Heart left ventricle (tissue), 16 donors: ENCODE measurements at regions of chr11 and their contacts with region 1.

Region 1: DNA sequence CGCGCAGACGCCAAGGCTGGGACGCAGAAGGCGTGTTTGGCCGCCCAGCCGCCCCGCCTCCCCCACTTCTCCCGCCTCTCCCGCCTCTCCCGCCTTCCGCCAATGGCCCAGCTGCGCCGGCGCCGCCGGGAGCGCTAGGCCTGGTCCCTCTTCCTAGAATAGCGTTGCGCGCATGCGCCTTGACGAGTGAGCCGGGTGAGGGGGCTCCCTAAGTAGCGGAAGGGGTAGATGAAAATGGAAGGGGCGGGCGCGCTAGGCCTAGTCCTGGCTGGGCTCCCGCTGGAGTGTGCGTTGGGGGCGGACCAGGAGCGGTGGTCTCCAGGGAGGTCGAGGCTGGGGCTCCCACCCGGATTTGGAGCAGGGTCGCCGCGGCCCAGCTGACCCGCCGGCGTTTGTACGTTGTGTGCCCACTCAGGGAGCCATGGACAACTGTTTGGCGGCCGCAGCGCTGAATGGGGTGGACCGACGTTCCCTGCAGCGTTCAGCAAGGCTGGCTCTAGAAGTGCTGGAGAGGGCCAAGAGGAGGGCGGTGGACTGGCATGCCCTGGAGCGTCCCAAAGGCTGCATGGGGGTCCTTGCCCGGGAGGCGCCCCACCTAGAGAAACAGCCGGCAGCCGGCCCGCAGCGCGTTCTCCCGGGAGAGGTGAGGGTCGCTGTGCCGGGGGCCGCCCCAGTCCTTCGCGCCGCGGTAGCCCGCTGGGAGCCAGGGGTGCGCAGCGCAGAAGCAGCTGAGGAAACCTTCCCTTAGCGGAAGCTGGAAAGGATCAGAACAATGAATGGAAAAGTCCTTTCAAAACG is at the start of gene AKIP1:
- DNase-seq: peak; percentile 97 to 98 (median 98)
- ATAC-seq: peak; percentile 94 to 97 (median 96)
- H3K4me3 ChIP-seq: peak within 1 kb of the TSS; percentile 40 to 96 (median 85)
- H3K27ac ChIP-seq: peak within 1 kb of the TSS; percentile 80 to 98 (median 94)
- H3K4me1 ChIP-seq: peaks cover 0 to 52% (median 25%) of the 10 kb centered on the region in 12 donors
- H3K27me3 ChIP-seq: no peaks in the 10 kb centered on the region
- CTCF ChIP-seq: no peak
- POLR2A ChIP-seq: peak in 1 of 2 donors; percentile 74
- total RNA-seq, gene AKIP1: 21.6 to 39.9 (median 27.4) TPM

Region 2: DNA sequence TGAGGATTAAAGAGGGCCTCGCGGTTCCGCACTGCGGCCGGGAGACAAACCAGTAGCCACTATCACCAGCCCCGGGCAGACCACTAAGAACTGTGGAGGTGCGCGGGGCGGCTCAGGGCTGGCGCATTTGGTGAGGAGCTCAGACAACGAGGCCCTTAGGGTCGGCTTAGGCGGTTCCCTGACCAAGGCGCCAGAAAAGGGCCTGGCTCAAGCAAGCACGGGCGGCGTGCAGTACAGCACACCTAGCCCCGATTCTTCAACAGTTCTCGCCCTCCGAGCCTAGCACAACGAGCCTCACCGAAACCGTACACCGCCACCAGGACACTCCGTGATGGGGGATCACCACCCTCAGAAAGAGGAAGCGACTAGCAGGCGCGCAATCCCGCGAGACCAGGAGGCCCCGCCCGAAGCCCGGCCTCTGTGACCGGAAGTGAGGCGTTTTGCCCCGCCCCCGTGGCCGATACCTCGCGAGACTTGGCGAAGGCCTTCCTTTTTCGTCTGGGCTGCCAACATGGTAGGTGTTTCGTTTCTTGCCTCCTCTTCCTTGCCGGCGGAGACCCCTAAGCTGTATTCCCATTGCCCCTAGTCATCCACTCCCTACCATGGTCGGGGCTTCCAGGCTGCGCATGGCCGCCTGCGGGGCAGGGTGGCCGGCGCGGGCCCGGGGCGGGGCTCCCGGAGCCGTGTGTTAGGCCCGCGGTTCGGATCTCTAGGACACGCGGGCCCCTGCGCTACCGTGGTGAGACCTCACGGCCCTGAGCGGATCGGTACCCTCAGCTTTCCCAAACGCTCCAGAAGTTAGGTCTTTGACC is 228.7 kb before region 1 on chr11 and contains the starts of genes RPL27A and TRIM66:
- intact Hi-C with region 1: loop called in 5 of 10 experiments (anchors 5 to 10 kb)
- DNase-seq: peak; percentile 99
- ATAC-seq: peak; percentile 97 to 99 (median 98)
- H3K4me3 ChIP-seq: peak within 1 kb of the TSS; percentile 58 to 100 (median 90)
- H3K27ac ChIP-seq: peak within 1 kb of the TSS; percentile 91 to 98 (median 96)
- H3K4me1 ChIP-seq: peaks cover 0 to 34% (median 22%) of the 10 kb centered on the region in 12 donors
- H3K27me3 ChIP-seq: no peaks in the 10 kb centered on the region
- CTCF ChIP-seq: peak in 6 of 12 donors; percentile 7 to 26 (median 13)
- POLR2A ChIP-seq: peak; percentile 51 to 97
- total RNA-seq, gene RPL27A: 299 to 597 (median 438) TPM
- total RNA-seq, gene TRIM66: 0.71 to 10.1 (median 4.1) TPM

Region 3: DNA sequence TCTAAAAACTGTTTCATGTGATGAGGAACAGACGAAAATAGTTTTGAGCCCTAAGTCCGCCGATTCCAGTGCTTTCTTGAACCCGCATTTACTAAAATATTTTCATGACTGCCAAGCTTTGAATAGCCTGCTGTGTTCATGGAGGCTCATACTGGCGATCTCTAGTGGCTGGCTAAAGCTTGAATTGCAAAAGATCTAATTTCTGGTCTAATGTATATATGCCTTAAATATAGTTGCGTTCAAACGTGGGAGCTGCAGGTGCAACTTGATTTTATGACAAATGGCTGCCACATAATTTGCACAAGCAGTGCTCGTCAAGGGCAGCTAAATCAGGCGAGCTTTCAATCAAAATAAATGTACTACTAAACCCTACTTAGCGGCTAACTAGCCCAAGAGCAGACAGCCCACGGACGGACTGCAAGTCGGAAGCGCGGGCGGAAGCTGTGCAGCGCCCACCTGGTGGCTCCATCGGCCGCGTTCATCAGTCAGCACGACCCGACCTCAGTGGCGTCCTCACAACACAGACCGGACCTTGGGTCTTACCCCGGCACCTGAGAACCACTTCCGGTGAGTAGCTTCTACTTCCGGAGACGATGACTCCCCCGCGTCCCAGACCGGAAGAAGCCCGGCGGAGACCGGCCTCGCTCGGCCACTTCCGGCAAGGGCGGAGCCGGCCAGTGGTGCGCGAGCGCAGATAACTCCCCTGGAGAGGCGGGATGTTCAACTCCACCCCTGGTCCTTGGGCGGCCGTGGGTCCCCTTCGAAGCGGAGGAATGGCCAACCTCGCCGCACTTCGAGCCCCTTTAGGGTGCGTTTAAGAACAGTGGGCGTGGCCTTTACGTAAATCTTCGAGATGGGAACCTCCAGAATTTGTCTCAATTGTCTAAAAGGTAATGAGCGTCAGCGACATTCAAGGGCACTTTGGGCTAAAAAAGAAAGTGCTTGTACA is 222.5 kb before region 1 on chr11:
- intact Hi-C with region 1: loop called in 6 of 10 experiments (anchors 2 to 10 kb)
- DNase-seq: peak; percentile 94 to 97 (median 96)
- ATAC-seq: peak; percentile 97 to 99 (median 98)
- H3K4me3 ChIP-seq: peak overlapping the region; percentile 38 to 75 (median 66)
- H3K27ac ChIP-seq: peak overlapping the region; percentile 45 to 96 (median 88)
- H3K4me1 ChIP-seq: peaks cover 0 to 44% (median 22%) of the 10 kb centered on the region in 12 donors
- H3K27me3 ChIP-seq: no peaks in the 10 kb centered on the region
- CTCF ChIP-seq: peak in 5 of 12 donors; percentile 17 to 53 (median 49)
- POLR2A ChIP-seq: peak in 1 of 2 donors; percentile 71

Region 4: GRCh38 chr11:8768625-8769333 is 142.4 kb before region 1 on chr11:
- intact Hi-C with region 1: no loop called
- DNase-seq: peak in 4 of 5 donors; percentile 71 to 88 (median 80)
- ATAC-seq: peak; percentile 90 to 94 (median 93)
- H3K4me3 ChIP-seq: no peak overlapping the region
- H3K27ac ChIP-seq: peak overlapping the region; percentile 31 to 86 (median 72)
- H3K4me1 ChIP-seq: peaks cover 8 to 90% (median 44%) of the 10 kb centered on the region in 12 donors
- H3K27me3 ChIP-seq: no peaks in the 10 kb centered on the region
- CTCF ChIP-seq: peak in 6 of 12 donors; percentile 8 to 43 (median 25)
- POLR2A ChIP-seq: no peak

Region 5: DNA sequence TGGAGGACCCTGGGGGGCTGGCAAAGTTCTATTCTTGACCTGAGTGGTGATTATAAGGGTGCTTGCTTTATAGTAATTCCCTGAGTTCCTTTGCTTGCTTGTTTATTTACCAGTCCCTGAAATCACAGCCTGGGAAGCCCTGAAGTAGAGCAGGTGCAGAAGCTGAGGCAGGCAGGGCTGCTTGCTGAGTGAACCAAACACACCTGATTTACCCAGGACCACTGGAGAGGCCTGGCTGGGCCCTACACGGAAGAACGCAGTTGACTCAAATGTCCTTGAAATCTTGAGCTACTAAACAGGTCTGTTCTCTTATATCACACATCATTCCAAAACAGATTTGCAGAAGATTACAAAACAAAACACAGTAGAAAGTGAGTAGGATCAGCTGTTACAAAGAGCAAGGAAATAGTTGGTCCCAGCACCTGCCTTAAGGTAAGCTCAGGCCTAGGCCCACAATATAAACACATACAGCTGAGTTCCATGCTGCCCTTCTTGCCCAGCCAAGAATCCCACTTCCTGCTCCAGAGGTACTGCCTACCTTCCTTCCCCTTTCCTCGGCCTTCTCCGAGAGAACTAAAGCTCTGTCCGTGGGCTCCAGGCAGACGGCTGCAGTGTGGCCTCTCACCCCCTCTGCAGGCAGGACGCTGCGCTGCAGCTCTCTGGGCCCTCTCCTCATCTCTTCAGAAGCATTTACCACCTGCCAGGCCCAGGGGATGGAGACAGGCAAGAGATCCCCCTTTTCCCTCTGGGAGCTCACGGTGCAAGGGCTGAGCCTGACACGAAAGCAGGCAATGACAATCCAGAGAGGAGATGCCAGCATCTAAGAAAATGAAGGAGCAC is 226.3 kb after region 1 on chr11:
- intact Hi-C with region 1: loop called in 8 of 10 experiments (anchors 5 to 10 kb)
- DNase-seq: peak; percentile 67 to 82 (median 70)
- ATAC-seq: peak; percentile 84 to 92 (median 91)
- H3K4me3 ChIP-seq: no peak overlapping the region
- H3K27ac ChIP-seq: no peak overlapping the region
- H3K4me1 ChIP-seq: peaks cover 0 to 34% (median 12%) of the 10 kb centered on the region in 12 donors
- H3K27me3 ChIP-seq: no peaks in the 10 kb centered on the region
- CTCF ChIP-seq: peak; percentile 89 to 98 (median 92)
- POLR2A ChIP-seq: no peak